WTC11 (cell line): ENCODE measurements at regions of chr20 and their contacts with region 1.

Region 1: DNA sequence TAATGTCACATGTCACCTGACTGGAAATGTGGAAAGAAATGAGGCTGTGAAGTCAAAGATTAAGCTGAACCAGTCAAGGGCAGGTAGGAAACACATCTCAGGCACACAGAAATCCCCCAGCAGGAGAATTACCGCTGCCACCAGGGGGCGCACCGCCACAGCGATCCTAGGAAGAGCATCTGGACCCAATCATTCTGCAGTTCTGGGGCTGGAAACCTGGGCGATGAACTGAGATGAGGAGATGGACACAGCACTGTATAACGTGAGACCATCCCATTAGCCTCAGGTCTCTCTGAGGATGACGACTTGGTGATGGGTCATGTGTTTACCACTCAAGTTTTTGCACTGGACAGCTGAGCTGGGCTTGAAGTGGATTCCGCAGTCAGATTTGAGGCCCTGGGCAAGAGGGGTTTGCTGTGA is 6.5 kb upstream of the SLC24A3 start:
- DNase-seq: peak; percentile 93
- ATAC-seq: peak; percentile 60
- H3K4me3 Mint-ChIP-seq: no peak overlapping the region
- H3K27ac Mint-ChIP-seq: no peak overlapping the region
- H3K4me1 Mint-ChIP-seq: peaks cover 55% of the 10 kb centered on the region
- H3K27me3 Mint-ChIP-seq: no peaks in the 10 kb centered on the region
- CTCF ChIP-seq: peak; percentile 93

Region 2: GRCh38 chr20:18904624-18905023 is 301.4 kb before region 1 on chr20:
- CTCF ChIA-PET with region 1: interaction called, 12 read pairs
- POLR2A ChIA-PET with region 1: no interaction called
- DNase-seq: peak; percentile 13
- ATAC-seq: peak; percentile 62; the same call in 1 of the 2 replicates
- H3K4me3 Mint-ChIP-seq: no peak overlapping the region
- H3K27ac Mint-ChIP-seq: no peak overlapping the region
- H3K4me1 Mint-ChIP-seq: peaks cover 37% of the 10 kb centered on the region
- H3K27me3 Mint-ChIP-seq: no peaks in the 10 kb centered on the region; the same call in 1 of the 2 replicates
- CTCF ChIP-seq: no peak

Region 3: GRCh38 chr20:18943542-18943941 is 262.4 kb before region 1 on chr20:
- CTCF ChIA-PET with region 1: no interaction called
- POLR2A ChIA-PET with region 1: no interaction called
- DNase-seq: no peak
- ATAC-seq: no peak
- H3K4me3 Mint-ChIP-seq: no peak overlapping the region
- H3K27ac Mint-ChIP-seq: no peak overlapping the region
- H3K4me1 Mint-ChIP-seq: no peaks in the 10 kb centered on the region
- H3K27me3 Mint-ChIP-seq: peaks cover 8% of the 10 kb centered on the region
- CTCF ChIP-seq: no peak

Region 4: GRCh38 chr20:19099596-19100545 is 106.1 kb before region 1 on chr20:
- CTCF ChIA-PET with region 1: no interaction called
- POLR2A ChIA-PET with region 1: no interaction called
- DNase-seq: no peak
- ATAC-seq: no peak
- H3K4me3 Mint-ChIP-seq: no peak overlapping the region
- H3K27ac Mint-ChIP-seq: no peak overlapping the region
- H3K4me1 Mint-ChIP-seq: peaks cover 23% of the 10 kb centered on the region
- H3K27me3 Mint-ChIP-seq: no peaks in the 10 kb centered on the region
- CTCF ChIP-seq: no peak

Region 5: GRCh38 chr20:19193349-19193748 is 12.6 kb before region 1 on chr20:
- CTCF ChIA-PET with region 1: interaction called, 11 read pairs
- POLR2A ChIA-PET with region 1: no interaction called
- DNase-seq: no peak
- ATAC-seq: no peak
- H3K4me3 Mint-ChIP-seq: no peak overlapping the region
- H3K27ac Mint-ChIP-seq: no peak overlapping the region
- H3K4me1 Mint-ChIP-seq: no peaks in the 10 kb centered on the region
- H3K27me3 Mint-ChIP-seq: no peaks in the 10 kb centered on the region; the same call in 1 of the 2 replicates
- CTCF ChIP-seq: no peak